Cardiac septum (tissue), 1 donor: ENCODE measurements at regions of chr5 and their contacts with region 1.

Region 1: GRCh38 chr5:59275510-59276324 is 617.8 kb downstream of the PDE4D start:
- DNase-seq: no peak

Region 2: GRCh38 chr5:59222687-59223521 is 52.8 kb before region 1 on chr5:
- intact Hi-C with region 1: loop called (anchors 1 kb)
- DNase-seq: no peak

Region 3: DNA sequence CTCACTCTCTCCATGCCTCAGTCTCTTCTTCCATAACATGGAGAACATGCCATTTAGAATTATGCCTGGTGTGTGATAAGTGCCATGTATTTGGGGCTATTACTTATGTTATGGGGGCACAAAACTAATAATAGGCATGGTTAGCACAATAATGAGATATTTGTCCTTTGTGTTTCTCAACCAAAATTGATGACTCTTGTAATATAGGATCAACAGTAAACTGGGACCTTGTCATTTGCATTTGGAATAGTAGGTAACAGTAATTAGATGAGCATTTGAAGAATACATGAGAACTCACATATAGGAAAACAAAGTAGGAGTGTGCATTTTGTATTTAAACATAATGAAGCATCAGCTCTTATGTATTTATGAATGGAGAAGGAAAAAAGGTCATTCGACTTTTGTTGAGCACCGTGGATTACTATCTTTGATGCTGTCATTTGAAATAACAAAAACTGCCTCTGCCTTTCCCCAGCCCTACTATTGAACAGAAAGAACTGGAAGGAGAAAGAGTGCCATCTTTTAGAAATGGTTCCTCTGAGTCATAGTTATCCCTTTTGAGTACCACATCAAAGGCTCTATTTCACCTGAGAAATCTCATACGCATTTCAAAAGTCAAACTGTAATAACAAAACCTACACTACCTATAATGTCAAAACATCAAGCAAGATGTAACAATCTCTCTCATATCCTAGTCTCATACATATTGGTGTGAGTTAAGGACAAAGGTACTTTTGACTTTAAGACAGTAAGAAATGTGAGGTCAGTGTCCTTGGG is 37.4 kb before region 1 on chr5:
- intact Hi-C with region 1: loop called (anchors 5 kb)
- DNase-seq: no peak

Region 4: DNA sequence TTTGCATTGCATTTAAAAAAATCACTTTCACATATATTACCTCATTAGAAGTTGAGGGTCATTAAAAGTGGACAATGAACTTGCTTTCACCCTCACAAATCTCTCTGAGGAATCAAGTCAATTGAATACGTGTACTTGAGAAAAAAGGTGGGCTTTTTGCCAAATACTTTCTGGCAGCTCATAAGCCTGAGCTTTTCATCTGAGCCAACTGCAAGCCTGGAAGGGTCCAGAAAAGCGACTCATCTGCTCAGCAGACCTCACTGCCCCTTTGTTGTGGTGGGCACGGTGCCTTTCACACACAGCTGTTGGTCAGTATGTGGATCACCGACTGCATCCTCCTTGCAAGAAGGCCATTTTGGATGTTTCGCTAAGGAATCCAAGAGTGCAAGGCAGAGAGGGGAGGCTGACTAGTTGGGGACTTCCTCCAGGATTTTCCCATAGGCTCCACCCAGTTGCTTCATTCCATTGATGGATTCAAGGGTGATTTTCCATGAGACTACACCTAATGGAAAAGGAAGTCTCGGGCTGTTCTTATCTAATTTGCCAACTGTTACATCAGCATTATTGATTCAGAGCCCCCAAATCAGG is 53.1 kb after region 1 on chr5:
- intact Hi-C with region 1: loop called (anchors 5 kb)
- DNase-seq: no peak

Region 5: DNA sequence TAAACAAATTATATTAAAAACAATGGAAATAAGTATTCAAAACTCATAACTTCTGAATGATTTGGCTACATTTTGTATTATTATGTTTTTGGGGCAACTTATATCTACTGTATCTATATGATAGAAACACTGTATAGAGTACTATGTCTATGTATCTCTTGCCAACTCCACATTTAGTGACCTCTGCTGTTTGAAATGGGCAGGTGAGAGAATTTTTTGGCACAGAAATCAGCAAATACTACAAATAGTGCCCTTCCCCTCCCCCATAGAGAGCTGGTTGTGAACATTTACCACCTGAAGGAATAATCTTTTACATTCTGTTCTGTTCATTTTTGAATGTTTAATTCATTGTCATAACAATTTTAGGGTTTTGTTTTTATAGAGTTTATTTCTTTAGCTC is 72.5 kb after region 1 on chr5:
- intact Hi-C with region 1: no loop called
- DNase-seq: no peak